ENCODE measurements at regions of chr5 and their contacts with region 1.

Region 1: GRCh38 chr5:42487077-42487476 is 63.8 kb downstream of the GHR start:
- DNase-seq: no peak
- ATAC-seq: peak in 2 of 4 donors; percentile 32 to 48
- H3K4me3 ChIP-seq: no peak overlapping the region
- H3K27ac ChIP-seq: no peak overlapping the region
- H3K4me1 ChIP-seq: peaks cover 0 to 35% (median 18%) of the 10 kb centered on the region in 12 donors
- H3K27me3 ChIP-seq: no peaks in the 10 kb centered on the region
- CTCF ChIP-seq: no peak
- POLR2A ChIP-seq: no peak

Region 2: DNA sequence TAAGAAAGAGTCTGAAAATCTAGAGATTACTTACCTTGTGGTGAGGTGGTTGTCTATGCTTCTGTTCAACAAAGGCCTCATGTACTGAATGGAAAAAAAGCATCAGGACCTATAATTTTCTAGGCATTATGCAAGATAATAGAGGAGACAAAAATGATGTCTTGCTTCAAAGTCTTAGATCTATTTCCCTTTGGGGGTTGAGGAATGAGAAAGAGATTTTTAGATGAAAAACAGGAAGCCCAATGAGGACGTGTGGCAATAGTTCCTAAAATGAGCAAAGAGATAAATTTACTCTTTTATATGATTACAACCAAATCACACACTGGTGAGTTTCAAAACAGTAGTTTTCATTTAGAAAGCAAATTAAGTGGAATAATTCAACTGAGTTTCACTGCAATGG is 35.7 kb after region 1 on chr5:
- intact Hi-C with region 1: loop called in 1 of 10 experiments (anchors 2 kb)
- DNase-seq: no peak
- ATAC-seq: no peak
- H3K4me3 ChIP-seq: no peak overlapping the region
- H3K27ac ChIP-seq: no peak overlapping the region
- H3K4me1 ChIP-seq: peaks cover 0 to 45% (median 9%) of the 10 kb centered on the region in 12 donors
- H3K27me3 ChIP-seq: no peaks in the 10 kb centered on the region
- CTCF ChIP-seq: no peak
- POLR2A ChIP-seq: no peak

Region 3: DNA sequence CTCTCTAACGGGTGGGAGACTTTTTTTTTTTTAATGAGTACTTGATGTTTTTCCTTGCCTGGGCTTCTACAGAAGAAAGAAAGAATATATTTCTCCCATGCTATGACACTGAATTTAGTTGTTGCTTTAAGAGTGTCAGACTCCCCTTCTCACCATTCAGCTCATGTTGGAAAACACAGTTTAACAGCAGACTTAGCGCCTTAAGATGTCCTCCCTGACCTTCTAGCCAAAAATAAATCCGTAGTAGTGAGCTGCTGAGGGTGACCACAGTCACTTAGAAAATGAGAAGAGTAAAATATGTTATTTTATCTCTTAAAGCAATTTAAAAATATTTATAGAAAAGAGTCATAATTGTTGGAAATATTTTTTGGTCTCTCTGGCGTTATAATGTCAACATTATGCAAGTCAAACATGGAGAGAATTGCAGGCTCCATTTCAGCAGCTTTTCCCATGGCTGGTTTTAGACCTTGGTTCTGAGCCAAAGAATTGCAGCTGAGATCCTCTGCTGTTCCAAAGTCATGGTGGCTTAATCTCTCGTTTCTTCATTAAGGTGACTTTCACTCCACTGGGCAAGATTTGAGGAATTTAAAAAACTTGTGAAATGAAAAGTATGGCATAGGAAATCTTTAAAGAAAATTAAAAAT is 79.7 kb after region 1 on chr5:
- intact Hi-C with region 1: no loop called
- DNase-seq: peak in 1 of 5 donors; percentile 29
- ATAC-seq: peak; percentile 49 to 79 (median 66)
- H3K4me3 ChIP-seq: peak overlapping the region in 7 of 12 donors; percentile 1 to 19 (median 4)
- H3K27ac ChIP-seq: peak overlapping the region in 11 of 12 donors; percentile 36 to 67 (median 54)
- H3K4me1 ChIP-seq: peaks cover 4 to 46% (median 21%) of the 10 kb centered on the region in 12 donors
- H3K27me3 ChIP-seq: no peaks in the 10 kb centered on the region
- CTCF ChIP-seq: no peak
- POLR2A ChIP-seq: no peak

Region 4: DNA sequence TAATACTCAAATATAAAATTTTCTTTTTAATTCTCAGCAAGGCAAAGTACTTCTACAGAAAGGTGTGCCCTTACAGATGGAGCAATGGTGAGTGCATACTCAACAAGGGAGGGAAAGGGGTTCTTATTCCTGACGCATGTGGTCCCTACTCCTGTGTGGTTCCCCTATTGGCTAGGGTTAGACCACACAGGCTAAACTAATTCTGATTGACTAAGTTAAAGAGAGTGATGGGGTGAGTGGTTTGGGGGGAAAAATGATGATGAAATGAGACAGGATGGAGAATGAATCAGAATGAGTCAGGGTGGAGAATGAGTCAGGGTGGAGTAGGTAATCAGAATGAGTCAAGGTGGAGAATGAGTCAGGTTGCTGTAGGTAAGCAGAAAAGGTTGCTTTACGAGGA is 849.1 kb after region 1 on chr5:
- intact Hi-C with region 1: no loop called
- DNase-seq: no peak
- ATAC-seq: no peak
- H3K4me3 ChIP-seq: no peak overlapping the region
- H3K27ac ChIP-seq: no peak overlapping the region
- H3K4me1 ChIP-seq: no peaks in the 10 kb centered on the region
- H3K27me3 ChIP-seq: peaks cover 0 to 3% (median 0%) of the 10 kb centered on the region in 9 donors
- CTCF ChIP-seq: no peak
- POLR2A ChIP-seq: no peak